Right cardiac atrium (tissue), 5 donors: ENCODE measurements at regions of chr20 and their contacts with region 1.

Region 1: GRCh38 chr20:45293041-45294002 is 13.3 kb upstream of the RBPJL start:
- DNase-seq: peak; percentile 85 to 94 (median 93)
- ATAC-seq: peak; percentile 86 to 92
- H3K4me3 ChIP-seq: peak overlapping the region; percentile 47
- H3K27ac ChIP-seq: no peak overlapping the region
- H3K4me1 ChIP-seq: no peaks in the 10 kb centered on the region
- H3K27me3 ChIP-seq: no peaks in the 10 kb centered on the region

Region 2: GRCh38 chr20:45011108-45011526 is 282.2 kb before region 1 on chr20:
- intact Hi-C with region 1: loop called in 2 of 4 experiments (anchors 10 kb)
- DNase-seq: peak in 2 of 3 donors; percentile 33 to 65
- ATAC-seq: peak; percentile 71 to 72
- H3K4me3 ChIP-seq: no peak overlapping the region
- H3K27ac ChIP-seq: no peak overlapping the region
- H3K4me1 ChIP-seq: no peaks in the 10 kb centered on the region
- H3K27me3 ChIP-seq: no peaks in the 10 kb centered on the region

Region 3: DNA sequence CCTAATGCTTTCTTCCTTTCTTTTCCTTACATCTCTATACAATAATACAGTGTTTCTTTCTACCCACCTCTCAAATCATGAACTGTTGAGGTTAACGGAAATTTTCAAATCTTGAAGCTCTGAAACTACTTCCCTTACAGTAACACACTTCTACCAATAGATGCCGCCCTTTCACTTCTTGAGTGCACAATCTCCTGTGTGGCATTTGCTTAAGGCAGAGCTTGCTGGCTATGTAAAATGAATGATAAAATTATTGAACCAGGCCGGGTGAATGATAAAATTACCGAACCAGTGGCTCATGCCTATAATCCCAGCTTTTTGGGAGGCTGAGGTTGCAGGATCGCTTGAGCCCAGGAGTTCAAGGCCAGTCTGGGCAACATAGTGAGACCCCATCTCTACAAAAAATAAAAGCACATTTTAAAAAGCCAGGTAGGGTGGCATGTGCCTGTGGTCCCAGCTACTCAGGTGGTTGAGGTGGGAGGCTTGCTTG is 249.2 kb before region 1 on chr20:
- intact Hi-C with region 1: loop called in 1 of 4 experiments (anchors 10 kb)
- DNase-seq: no peak
- ATAC-seq: peak; percentile 62 to 80
- H3K4me3 ChIP-seq: no peak overlapping the region
- H3K27ac ChIP-seq: no peak overlapping the region
- H3K4me1 ChIP-seq: no peaks in the 10 kb centered on the region
- H3K27me3 ChIP-seq: no peaks in the 10 kb centered on the region